Calu3 (cell line): ENCODE measurements at regions of chr4 and their contacts with region 1.

Region 1: DNA sequence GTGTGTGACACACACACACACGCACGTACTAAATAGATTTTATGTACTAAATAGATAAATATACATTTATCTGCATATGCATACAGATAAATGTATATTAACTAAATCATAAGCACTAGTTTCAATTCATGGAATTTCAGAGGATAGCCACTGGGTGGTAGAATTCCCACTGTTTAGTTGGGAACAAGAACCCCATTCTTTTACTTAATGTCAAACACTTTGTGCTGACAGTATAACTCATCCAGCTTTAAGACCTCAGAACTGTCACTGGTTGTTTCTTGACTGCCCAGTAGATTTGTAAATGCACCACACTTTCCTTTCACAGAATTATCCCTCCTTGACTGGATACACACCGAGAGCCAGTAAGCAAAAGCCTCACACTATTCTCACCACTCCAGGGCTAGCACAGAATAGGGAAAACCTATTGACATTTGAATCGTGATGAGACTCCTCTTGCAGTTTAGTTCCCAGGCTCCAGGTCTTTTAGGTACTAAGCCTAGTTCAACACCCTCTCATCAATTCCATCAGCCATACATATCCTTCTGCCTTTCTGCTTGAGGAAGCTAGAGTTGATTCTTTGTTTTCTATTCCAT is 32.4 kb downstream of the PPARGC1A start:
- DNase-seq: no peak
- H3K4me3 Mint-ChIP-seq: no peak overlapping the region
- H3K27ac Mint-ChIP-seq: peak overlapping the region; percentile 50
- H3K4me1 Mint-ChIP-seq: peaks cover 22% of the 10 kb centered on the region
- H3K27me3 Mint-ChIP-seq: no peaks in the 10 kb centered on the region
- CTCF ChIP-seq: no peak

Region 2: DNA sequence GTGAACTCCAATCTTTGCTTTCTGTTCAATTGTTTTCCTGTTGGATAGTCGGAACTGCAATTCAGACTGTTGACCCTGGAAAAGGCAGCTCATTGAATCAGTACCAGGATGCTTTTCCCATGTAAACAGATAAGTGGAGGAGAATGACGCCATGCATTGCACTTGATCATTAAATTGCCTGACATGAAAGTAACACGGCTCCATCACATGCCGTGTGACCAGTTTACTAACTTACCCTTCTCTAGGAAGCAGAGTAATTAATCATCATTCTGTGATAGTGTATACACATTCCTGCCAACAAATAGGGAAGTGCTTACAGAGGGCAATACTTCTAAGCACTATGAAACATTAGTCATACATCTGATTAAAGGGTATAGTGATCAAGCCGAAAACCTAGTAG is 69.0 kb before region 1 on chr4:
- CTCF ChIA-PET with region 1: no interaction called
- intact Hi-C with region 1: loop called (anchors 1 kb)
- DNase-seq: peak; percentile 45
- H3K4me3 Mint-ChIP-seq: peak overlapping the region; percentile 48
- H3K27ac Mint-ChIP-seq: peak overlapping the region; percentile 88
- H3K4me1 Mint-ChIP-seq: peaks cover 27% of the 10 kb centered on the region
- H3K27me3 Mint-ChIP-seq: no peaks in the 10 kb centered on the region
- CTCF ChIP-seq: no peak

Region 3: GRCh38 chr4:23952258-23952657 is 94.8 kb after region 1 on chr4:
- CTCF ChIA-PET with region 1: no interaction called
- intact Hi-C with region 1: loop called (anchors 5 kb)
- DNase-seq: no peak
- H3K4me3 Mint-ChIP-seq: no peak overlapping the region
- H3K27ac Mint-ChIP-seq: no peak overlapping the region
- H3K4me1 Mint-ChIP-seq: peaks cover 14% of the 10 kb centered on the region
- H3K27me3 Mint-ChIP-seq: no peaks in the 10 kb centered on the region
- CTCF ChIP-seq: no peak

Region 4: GRCh38 chr4:24032371-24032989 is 175.0 kb after region 1 on chr4:
- CTCF ChIA-PET with region 1: no interaction called
- intact Hi-C with region 1: loop called (anchors 2 kb)
- DNase-seq: peak; percentile 3
- H3K4me3 Mint-ChIP-seq: no peak overlapping the region
- H3K27ac Mint-ChIP-seq: no peak overlapping the region
- H3K4me1 Mint-ChIP-seq: no peaks in the 10 kb centered on the region
- H3K27me3 Mint-ChIP-seq: no peaks in the 10 kb centered on the region
- CTCF ChIP-seq: no peak

Region 5: DNA sequence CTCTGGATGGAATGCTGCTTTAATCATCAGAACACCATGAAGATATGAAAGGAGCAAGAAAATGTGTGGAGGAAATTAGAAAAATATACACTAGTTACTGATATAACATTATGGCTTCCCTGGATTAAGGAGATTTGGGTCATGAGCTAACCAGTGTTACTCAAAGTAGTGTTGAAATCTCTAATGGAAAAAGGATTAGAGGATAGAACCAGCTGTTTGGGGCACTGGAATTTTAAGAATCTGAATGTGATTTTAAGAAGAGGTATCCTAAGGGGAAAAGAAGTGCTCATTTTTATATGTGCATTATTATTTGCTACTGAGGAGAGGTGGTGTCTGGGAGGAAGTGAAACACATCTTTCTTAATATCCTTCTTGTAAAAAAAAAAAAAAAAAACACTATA is 196.5 kb after region 1 on chr4:
- CTCF ChIA-PET with region 1: no interaction called
- intact Hi-C with region 1: no loop called
- DNase-seq: no peak
- H3K4me3 Mint-ChIP-seq: no peak overlapping the region
- H3K27ac Mint-ChIP-seq: no peak overlapping the region
- H3K4me1 Mint-ChIP-seq: no peaks in the 10 kb centered on the region
- H3K27me3 Mint-ChIP-seq: no peaks in the 10 kb centered on the region
- CTCF ChIP-seq: no peak

Region 6: DNA sequence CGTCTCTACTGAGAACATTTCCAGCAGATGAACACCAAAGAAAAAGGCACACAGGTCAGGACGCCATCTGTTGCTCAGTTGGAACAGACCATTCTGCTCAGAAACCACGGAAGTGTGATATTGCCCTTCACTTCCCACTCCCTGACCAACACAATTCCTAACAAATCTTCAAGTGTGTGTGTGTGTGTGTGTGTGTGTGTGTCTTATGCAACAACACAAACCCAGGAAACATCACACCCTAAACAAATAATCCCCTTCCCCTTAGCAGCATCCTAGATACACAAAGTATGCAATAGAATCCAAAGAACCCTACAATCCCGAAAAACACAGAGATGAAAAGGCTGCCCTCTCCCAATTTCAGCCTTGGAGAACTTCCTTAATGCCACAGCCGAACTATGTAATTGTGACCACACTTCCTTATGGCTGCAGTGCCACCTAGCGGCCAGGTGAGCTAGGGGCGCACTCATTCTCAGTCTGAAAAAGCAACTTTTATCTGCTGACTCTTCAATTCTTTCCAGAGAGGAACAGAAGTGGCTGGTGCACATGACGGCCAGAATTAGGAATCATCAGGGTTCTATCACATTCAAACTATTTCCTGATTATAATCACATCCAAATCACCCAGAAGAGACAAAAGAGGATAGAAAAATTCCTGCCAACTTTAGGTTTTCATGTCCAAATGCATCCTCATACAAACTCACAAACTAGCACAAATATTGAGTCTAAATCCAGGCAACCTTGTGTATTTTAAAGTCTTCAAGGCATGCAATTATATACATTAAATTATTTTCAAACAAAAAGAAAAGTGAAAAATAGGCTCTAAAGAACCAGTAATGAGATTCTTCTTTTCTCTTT is 561.9 kb after region 1 on chr4:
- CTCF ChIA-PET with region 1: no interaction called
- intact Hi-C with region 1: loop called (anchors 5 kb)
- DNase-seq: peak; percentile 75
- H3K4me3 Mint-ChIP-seq: no peak overlapping the region
- H3K27ac Mint-ChIP-seq: no peak overlapping the region
- H3K4me1 Mint-ChIP-seq: no peaks in the 10 kb centered on the region
- H3K27me3 Mint-ChIP-seq: no peaks in the 10 kb centered on the region
- CTCF ChIP-seq: peak; percentile 82